ENCODE measurements at regions of chr11 and their contacts with region 1.

Region 1: GRCh38 chr11:65569973-65570918 is at the start of gene ZNRD2:
- DNase-seq: peak; percentile 98 to 99 (median 99)
- H3K4me3 ChIP-seq: peak within 1 kb of the TSS; percentile 71 to 94
- H3K4me3 Mint-ChIP-seq: peak within 1 kb of the TSS; percentile 97 to 100 (median 98)
- H3K27ac ChIP-seq: peak within 1 kb of the TSS; percentile 99
- H3K27ac Mint-ChIP-seq: peak within 1 kb of the TSS; percentile 99 to 100 (median 99)
- H3K4me1 ChIP-seq: peaks cover 75% of the 10 kb centered on the region
- H3K4me1 Mint-ChIP-seq: peaks cover 44 to 92% (median 65%) of the 10 kb centered on the region in 4 donors
- H3K27me3 ChIP-seq: no peaks in the 10 kb centered on the region
- H3K27me3 Mint-ChIP-seq: peaks cover 0 to 3% of the 10 kb centered on the region in 2 donors
- total RNA-seq, gene ZNRD2: 24.6 to 27.5 TPM

Region 2: DNA sequence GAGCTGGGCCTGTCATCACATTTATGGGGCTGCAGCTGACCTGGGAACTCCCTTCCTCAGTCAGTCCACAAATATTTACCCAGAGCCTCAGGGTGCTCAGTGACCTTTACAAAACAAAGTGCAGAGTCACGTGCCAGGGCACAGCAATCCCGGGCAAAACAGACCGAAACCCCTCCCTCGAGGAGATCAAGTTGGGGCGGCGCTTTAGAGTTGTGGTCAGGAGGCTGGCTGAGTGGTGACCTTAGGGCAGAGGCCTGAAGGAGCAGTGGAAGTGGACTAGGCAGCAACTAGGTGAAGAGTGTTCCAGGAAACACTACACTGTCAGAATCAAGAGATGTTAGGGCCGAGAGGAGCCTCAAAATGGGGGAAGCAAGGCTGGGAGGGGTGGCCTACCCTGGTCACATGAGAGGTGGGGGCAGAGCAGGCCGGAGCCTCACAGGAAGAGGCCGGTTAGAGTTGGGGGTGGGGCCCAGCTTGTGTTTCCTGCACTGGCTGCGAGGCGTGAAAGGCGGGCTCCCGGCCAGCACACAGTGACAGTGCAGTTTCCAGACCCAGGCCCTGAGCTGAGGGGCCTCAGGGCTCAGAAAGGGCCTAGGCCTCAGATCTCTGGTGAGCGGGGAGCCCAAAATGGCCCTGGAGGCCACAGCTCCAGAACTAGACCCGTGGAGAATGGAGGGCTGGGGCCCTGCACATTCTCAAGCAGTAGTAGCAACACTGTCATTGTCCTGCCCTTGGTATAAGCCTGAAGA is 151.4 kb before region 1 on chr11:
- CTCF ChIA-PET with region 1: no interaction called
- POLR2A ChIA-PET with region 1: interaction called, 59 read pairs
- intact Hi-C with region 1: no loop called
- DNase-seq: peak; percentile 64 to 87 (median 70)
- H3K4me3 ChIP-seq: peak overlapping the region; percentile 86 to 95
- H3K4me3 Mint-ChIP-seq: peak overlapping the region; percentile 92 to 97 (median 95)
- H3K27ac ChIP-seq: peak overlapping the region; percentile 98
- H3K27ac Mint-ChIP-seq: peak overlapping the region; percentile 93 to 100 (median 97)
- H3K4me1 ChIP-seq: peaks cover 57% of the 10 kb centered on the region
- H3K4me1 Mint-ChIP-seq: peaks cover 30 to 72% (median 42%) of the 10 kb centered on the region in 4 donors
- H3K27me3 ChIP-seq: no peaks in the 10 kb centered on the region
- H3K27me3 Mint-ChIP-seq: peaks cover 0 to 4% of the 10 kb centered on the region in 2 donors

Region 3: DNA sequence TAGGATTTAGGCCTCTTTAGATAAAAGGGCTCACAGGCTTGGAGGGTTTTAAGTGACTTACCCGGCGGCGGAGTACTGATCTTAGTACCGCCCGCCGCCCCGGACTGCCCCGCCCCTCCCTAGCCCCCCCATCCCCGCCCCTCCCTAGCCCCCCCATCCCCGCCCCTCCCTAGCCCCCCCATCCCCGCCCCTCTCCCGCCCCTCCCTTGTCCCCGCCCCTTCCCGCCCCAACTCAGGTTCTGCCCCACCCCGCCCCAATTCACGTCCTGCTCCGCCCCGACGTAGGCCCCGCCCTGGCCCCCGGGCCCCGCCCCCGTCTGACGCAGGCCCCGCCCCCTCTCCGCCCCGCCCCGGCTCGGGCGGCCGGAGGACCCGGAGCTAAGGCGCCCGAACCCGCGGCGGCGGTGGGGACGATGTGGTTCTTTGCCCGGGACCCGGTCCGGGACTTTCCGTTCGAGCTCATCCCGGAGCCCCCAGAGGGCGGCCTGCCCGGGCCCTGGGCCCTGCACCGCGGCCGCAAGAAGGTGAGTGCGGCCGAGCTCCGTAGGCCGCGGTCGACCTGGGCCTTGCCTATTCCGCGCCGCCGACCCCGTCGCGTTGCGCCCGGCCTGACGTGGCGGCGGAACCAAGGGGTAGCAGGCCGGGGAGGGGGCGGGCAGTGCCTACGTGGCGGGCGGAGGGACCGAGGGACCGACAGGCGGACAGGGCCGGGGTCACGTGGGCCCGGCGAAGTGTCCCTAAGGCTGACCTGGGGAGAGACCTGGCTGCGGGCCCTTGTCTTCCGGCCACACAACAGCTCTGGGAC is 45.3 kb before region 1 on chr11 and contains the start of gene SCYL1:
- CTCF ChIA-PET with region 1: interaction called, 4 read pairs
- POLR2A ChIA-PET with region 1: interaction called, 19 read pairs
- intact Hi-C with region 1: loop called (anchors 2 kb)
- DNase-seq: peak; percentile 72 to 82 (median 75)
- H3K4me3 ChIP-seq: peak within 1 kb of the TSS; percentile 78 to 83
- H3K4me3 Mint-ChIP-seq: peak within 1 kb of the TSS; percentile 81 to 92 (median 88)
- H3K27ac ChIP-seq: peak within 1 kb of the TSS; percentile 84
- H3K27ac Mint-ChIP-seq: peak within 1 kb of the TSS; percentile 81 to 98 (median 94)
- H3K4me1 ChIP-seq: peaks cover 54% of the 10 kb centered on the region
- H3K4me1 Mint-ChIP-seq: peaks cover 35 to 63% (median 49%) of the 10 kb centered on the region in 4 donors
- H3K27me3 ChIP-seq: no peaks in the 10 kb centered on the region
- H3K27me3 Mint-ChIP-seq: no peaks in the 10 kb centered on the region
- total RNA-seq, gene SCYL1: 72.5 to 81.3 TPM

Region 4: GRCh38 chr11:65551572-65552398 is 18.5 kb before region 1 on chr11:
- CTCF ChIA-PET with region 1: interaction called, 26 read pairs
- POLR2A ChIA-PET with region 1: interaction called, 403 read pairs
- intact Hi-C with region 1: loop called (anchors 1 kb)
- DNase-seq: peak; percentile 56 to 65 (median 61)
- H3K4me3 ChIP-seq: no peak overlapping the region
- H3K4me3 Mint-ChIP-seq: peak overlapping the region in 7 of 8 donors; percentile 17 to 65 (median 50)
- H3K27ac ChIP-seq: no peak overlapping the region
- H3K27ac Mint-ChIP-seq: peak overlapping the region; percentile 77 to 92 (median 89)
- H3K4me1 ChIP-seq: peaks cover 77% of the 10 kb centered on the region
- H3K4me1 Mint-ChIP-seq: peaks cover 47 to 84% (median 66%) of the 10 kb centered on the region in 4 donors
- H3K27me3 ChIP-seq: no peaks in the 10 kb centered on the region
- H3K27me3 Mint-ChIP-seq: no peaks in the 10 kb centered on the region

Region 5: GRCh38 chr11:65593518-65594298 is 23.5 kb after region 1 on chr11:
- CTCF ChIA-PET with region 1: interaction called, 50 read pairs
- POLR2A ChIA-PET with region 1: interaction called, 118 read pairs
- intact Hi-C with region 1: loop called (anchors 1 kb)
- DNase-seq: peak in 4 of 5 donors; percentile 26 to 34 (median 28)
- H3K4me3 ChIP-seq: no peak overlapping the region
- H3K4me3 Mint-ChIP-seq: no peak overlapping the region
- H3K27ac ChIP-seq: no peak overlapping the region
- H3K27ac Mint-ChIP-seq: peak overlapping the region in 2 of 7 donors; percentile 10 to 42
- H3K4me1 ChIP-seq: peaks cover 30% of the 10 kb centered on the region
- H3K4me1 Mint-ChIP-seq: peaks cover 7 to 36% (median 12%) of the 10 kb centered on the region in 4 donors
- H3K27me3 ChIP-seq: no peaks in the 10 kb centered on the region
- H3K27me3 Mint-ChIP-seq: no peaks in the 10 kb centered on the region

Region 6: DNA sequence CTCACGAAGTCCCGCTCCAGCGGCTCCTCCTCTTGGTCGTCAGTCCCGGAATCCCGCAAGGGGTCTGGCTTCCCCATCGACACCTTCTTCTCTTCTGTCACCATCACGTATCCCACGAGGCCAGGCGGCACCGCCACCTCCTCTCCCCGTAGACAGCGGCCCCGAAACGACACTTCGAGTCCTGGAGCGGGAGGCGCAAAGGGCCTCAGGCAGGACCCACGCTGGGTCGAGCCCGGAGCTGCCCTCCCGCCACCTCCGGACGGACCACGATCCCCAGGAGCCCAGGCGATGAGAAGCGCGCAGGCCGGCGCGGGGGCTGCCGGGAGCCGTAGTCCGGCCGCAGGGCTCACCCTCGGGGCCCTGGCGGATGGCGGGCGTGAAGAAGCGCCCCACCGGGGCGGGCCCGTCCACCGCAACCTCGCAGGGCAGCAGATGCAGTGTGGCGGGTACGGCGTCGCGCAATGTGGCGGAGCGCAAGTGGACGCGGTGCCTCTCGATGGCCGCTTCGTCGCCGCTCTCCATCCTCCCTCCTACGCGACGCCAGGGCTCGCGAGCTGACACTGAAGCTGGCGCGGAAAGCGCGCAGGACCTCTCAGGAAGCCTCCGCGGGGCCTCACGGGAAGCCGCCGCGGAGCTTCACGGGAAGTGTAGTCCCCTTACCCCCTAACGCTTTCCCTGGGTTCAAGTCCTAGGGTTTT is 150.1 kb after region 1 on chr11 and contains the start of gene RNASEH2C:
- CTCF ChIA-PET with region 1: no interaction called
- POLR2A ChIA-PET with region 1: no interaction called
- intact Hi-C with region 1: no loop called
- DNase-seq: peak; percentile 70 to 79 (median 76)
- H3K4me3 ChIP-seq: peak within 1 kb of the TSS; percentile 86 to 87
- H3K4me3 Mint-ChIP-seq: peak within 1 kb of the TSS; percentile 89 to 93 (median 91)
- H3K27ac ChIP-seq: peak within 1 kb of the TSS; percentile 68
- H3K27ac Mint-ChIP-seq: peak within 1 kb of the TSS; percentile 85 to 94 (median 92)
- H3K4me1 ChIP-seq: peaks cover 24% of the 10 kb centered on the region
- H3K4me1 Mint-ChIP-seq: peaks cover 16 to 43% (median 29%) of the 10 kb centered on the region in 4 donors
- H3K27me3 ChIP-seq: no peaks in the 10 kb centered on the region
- H3K27me3 Mint-ChIP-seq: no peaks in the 10 kb centered on the region
- total RNA-seq, gene RNASEH2C: 69.1 to 69.7 TPM

Region 7: GRCh38 chr11:66001942-66002647 is 431.8 kb after region 1 on chr11 and contains the starts of genes BANF1 and EIF1AD:
- CTCF ChIA-PET with region 1: no interaction called
- POLR2A ChIA-PET with region 1: interaction called, 3 read pairs
- intact Hi-C with region 1: loop called (anchors 1 kb)
- DNase-seq: peak; percentile 95 to 97 (median 96)
- H3K4me3 ChIP-seq: peak within 1 kb of the TSS; percentile 68 to 82
- H3K4me3 Mint-ChIP-seq: peak within 1 kb of the TSS; percentile 94 to 100 (median 99)
- H3K27ac ChIP-seq: peak within 1 kb of the TSS; percentile 87
- H3K27ac Mint-ChIP-seq: peak within 1 kb of the TSS; percentile 96 to 99 (median 99)
- H3K4me1 ChIP-seq: peaks cover 26% of the 10 kb centered on the region
- H3K4me1 Mint-ChIP-seq: peaks cover 12 to 49% (median 27%) of the 10 kb centered on the region in 4 donors
- H3K27me3 ChIP-seq: no peaks in the 10 kb centered on the region
- H3K27me3 Mint-ChIP-seq: no peaks in the 10 kb centered on the region
- total RNA-seq, gene BANF1: 90.8 to 92.9 TPM
- total RNA-seq, gene EIF1AD: 60.2 to 65.4 TPM

Measured in CD4-positive, alpha-beta memory T cell (primary cell).